Mammary epithelial cell (primary cell): ENCODE measurements at regions of chr1 and their contacts with region 1.

Region 1: DNA sequence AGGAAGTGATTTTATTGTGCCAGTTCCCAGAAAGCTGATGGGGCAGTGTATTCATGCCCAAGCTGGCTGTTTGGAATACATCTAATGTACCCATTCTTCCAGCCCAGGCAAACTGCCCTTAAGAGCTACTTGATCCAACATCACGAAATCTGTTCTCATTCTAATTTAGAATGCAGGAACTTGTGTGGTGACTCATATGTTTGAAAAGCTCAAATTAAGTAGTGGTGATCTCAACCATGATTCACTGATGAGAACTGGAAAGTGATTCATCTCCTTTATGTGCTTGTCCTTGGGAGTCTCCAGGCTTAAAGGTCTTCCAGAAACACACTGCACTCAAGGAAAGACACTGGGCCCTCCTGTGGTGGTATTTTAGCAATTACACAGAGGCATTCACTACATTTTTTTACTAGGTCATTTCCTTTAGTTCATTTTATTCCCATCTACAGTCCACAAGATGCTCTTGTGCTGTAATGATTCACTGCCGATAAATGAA is 65.4 kb downstream of the RPE65 start:
- DNase-seq: peak; percentile 98
- H3K4me3 ChIP-seq: no peak overlapping the region
- H3K27ac ChIP-seq: peak overlapping the region; percentile 88
- H3K4me1 ChIP-seq: peaks cover 34% of the 10 kb centered on the region
- H3K27me3 ChIP-seq: no peaks in the 10 kb centered on the region
- CTCF ChIP-seq: peak; percentile 47

Region 2: DNA sequence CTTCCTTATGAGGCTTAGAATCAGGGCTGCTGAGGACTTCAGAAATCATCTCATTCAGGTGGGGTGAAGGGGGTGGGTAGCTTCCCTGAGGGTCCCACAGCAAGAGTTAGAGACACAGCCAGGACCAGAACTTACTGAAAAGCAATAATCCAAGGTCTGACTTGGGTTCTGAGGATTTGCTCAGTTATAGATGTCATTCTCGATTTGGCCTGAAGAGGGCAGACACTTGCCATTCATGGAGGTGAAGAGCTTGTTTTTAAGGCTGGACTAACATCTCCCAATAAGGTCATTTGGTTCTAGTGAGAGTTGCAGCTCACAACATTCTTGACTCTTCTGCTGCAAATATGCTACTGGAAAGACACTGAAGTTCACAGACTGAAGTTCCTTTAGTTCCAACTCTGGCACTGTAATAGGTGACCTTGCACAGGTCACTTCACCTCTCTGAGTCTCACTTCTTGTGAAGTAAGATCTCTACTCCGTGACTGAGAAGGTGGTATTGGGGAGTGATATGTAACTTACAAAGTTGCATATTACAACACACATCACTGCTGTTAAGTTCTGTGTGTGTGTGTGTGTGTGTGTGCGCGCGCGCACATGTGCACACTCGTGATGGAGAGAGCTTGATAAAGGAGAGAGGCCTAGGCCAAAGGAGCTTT is 264.1 kb before region 1 on chr1:
- CTCF ChIA-PET with region 1: interaction called, 4 read pairs
- dilution Hi-C with region 1: no loop called
- in situ Hi-C with region 1: no loop called
- intact Hi-C with region 1: loop called (anchors 1 kb)
- DNase-seq: peak; percentile 64
- H3K4me3 ChIP-seq: no peak overlapping the region
- H3K27ac ChIP-seq: no peak overlapping the region
- H3K4me1 ChIP-seq: no peaks in the 10 kb centered on the region
- H3K27me3 ChIP-seq: no peaks in the 10 kb centered on the region
- CTCF ChIP-seq: peak; percentile 76 to 78

Region 3: GRCh38 chr1:68197891-68198290 is 186.5 kb before region 1 on chr1:
- CTCF ChIA-PET with region 1: no interaction called
- dilution Hi-C with region 1: no loop called
- in situ Hi-C with region 1: no loop called
- intact Hi-C with region 1: no loop called
- DNase-seq: peak; percentile 87
- H3K4me3 ChIP-seq: no peak overlapping the region
- H3K27ac ChIP-seq: no peak overlapping the region
- H3K4me1 ChIP-seq: peaks cover 17% of the 10 kb centered on the region
- H3K27me3 ChIP-seq: no peaks in the 10 kb centered on the region
- CTCF ChIP-seq: no peak

Region 4: GRCh38 chr1:68293609-68294366 is 90.6 kb before region 1 on chr1:
- CTCF ChIA-PET with region 1: no interaction called
- dilution Hi-C with region 1: no loop called
- in situ Hi-C with region 1: no loop called
- intact Hi-C with region 1: no loop called
- DNase-seq: no peak
- H3K4me3 ChIP-seq: no peak overlapping the region
- H3K27ac ChIP-seq: no peak overlapping the region
- H3K4me1 ChIP-seq: no peaks in the 10 kb centered on the region
- H3K27me3 ChIP-seq: no peaks in the 10 kb centered on the region
- CTCF ChIP-seq: no peak

Region 5: GRCh38 chr1:68358439-68358838 is 25.9 kb before region 1 on chr1:
- CTCF ChIA-PET with region 1: interaction called, 11 read pairs
- dilution Hi-C with region 1: no loop called
- in situ Hi-C with region 1: no loop called
- intact Hi-C with region 1: no loop called
- DNase-seq: no peak
- H3K4me3 ChIP-seq: no peak overlapping the region
- H3K27ac ChIP-seq: no peak overlapping the region
- H3K4me1 ChIP-seq: peaks cover 4% of the 10 kb centered on the region
- H3K27me3 ChIP-seq: no peaks in the 10 kb centered on the region
- CTCF ChIP-seq: no peak

Region 6: DNA sequence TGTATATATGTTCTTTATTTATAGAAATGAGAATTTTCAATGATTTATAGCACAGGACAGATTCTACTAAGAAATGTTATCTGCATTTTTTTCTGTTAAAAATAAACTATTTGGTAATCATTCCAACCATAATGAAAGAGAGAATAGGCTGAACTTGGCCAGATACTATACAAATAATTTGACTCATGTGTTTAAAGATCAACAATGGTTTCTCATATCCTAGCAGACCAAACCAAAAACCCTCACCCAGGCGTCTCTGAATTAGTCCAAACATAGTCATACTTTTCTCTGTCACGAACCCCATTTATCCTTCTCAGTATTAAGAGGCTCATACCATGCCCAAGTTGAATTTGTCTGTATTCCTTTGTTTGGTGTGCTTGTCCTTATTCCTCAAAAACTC is 25.1 kb after region 1 on chr1:
- CTCF ChIA-PET with region 1: no interaction called
- dilution Hi-C with region 1: no loop called
- in situ Hi-C with region 1: no loop called
- intact Hi-C with region 1: no loop called
- DNase-seq: no peak
- H3K4me3 ChIP-seq: no peak overlapping the region
- H3K27ac ChIP-seq: no peak overlapping the region
- H3K4me1 ChIP-seq: no peaks in the 10 kb centered on the region
- H3K27me3 ChIP-seq: no peaks in the 10 kb centered on the region
- CTCF ChIP-seq: no peak

Region 7: DNA sequence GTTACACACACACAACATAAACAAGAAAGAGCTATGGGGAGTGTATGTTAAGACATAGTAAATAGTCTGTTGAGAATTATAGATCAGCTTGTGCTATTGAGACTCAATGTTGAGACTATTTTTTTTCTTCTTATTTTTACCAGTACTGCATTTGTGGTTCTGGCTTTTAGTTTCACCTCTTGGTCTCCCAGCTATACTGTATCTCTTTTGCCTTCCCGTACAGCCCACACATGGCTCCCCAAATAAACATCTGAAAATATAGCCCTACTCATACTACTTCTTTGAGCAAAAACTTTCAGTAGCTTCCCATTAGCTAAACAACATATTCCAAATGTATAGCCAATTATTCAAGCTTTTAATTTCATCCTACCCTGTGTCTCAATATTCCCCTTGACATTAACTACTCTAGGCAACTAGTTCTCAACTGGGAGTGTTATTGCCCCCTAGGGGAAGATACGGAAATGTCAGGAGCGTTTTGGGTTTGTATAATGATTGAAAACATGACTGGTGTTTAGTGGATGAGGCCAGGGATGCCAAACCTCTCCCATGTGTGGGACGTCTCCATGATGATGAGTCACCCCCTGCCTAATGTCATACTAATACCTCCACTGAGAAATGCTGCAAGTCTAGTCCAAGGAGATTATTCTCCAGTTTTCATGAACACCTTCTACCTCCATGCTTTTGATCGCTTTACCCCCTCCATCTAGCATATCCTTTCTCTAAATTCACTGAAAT is 58.6 kb after region 1 on chr1:
- CTCF ChIA-PET with region 1: no interaction called
- dilution Hi-C with region 1: no loop called
- in situ Hi-C with region 1: no loop called
- intact Hi-C with region 1: loop called (anchors 2 kb)
- DNase-seq: peak; percentile 81
- H3K4me3 ChIP-seq: no peak overlapping the region
- H3K27ac ChIP-seq: no peak overlapping the region
- H3K4me1 ChIP-seq: peaks cover 8% of the 10 kb centered on the region
- H3K27me3 ChIP-seq: no peaks in the 10 kb centered on the region
- CTCF ChIP-seq: peak; percentile 73 to 76